Naive thymus-derived CD4-positive, alpha-beta T cell (primary cell): ENCODE measurements at regions of chr2 and their contacts with region 1.

Region 1: DNA sequence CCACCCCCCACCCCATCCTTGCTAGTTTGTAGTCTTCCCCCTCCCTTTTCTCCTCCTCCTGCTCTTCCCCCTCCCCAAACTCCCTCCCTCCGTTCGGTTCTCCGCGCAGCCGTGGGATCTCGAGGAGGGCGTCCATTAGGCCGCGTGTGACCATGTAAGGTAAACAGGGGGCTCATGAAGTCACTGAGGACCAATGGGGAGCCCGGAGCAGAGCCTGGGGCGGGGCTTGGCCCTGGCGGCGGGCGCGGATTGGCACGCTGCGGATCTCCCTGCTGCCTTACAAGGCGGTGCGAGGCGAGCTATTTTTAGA is 246 bp upstream of the KLF7 start:
- DNase-seq: peak; percentile 88 to 99 (median 98)
- ATAC-seq: peak; percentile 93
- H3K4me3 ChIP-seq: peak overlapping the region; percentile 89
- H3K4me3 Mint-ChIP-seq: peak overlapping the region; percentile 94 to 100 (median 98)
- H3K27ac ChIP-seq: peak overlapping the region; percentile 100
- H3K27ac Mint-ChIP-seq: peak overlapping the region; percentile 93 to 99 (median 97)
- H3K4me1 ChIP-seq: peaks cover 0 to 17% of the 10 kb centered on the region in 2 donors
- H3K4me1 Mint-ChIP-seq: peaks cover 32 to 48% (median 36%) of the 10 kb centered on the region in 7 donors
- H3K27me3 ChIP-seq: no peaks in the 10 kb centered on the region
- H3K27me3 Mint-ChIP-seq: peaks cover 0 to 2% (median 0%) of the 10 kb centered on the region in 5 donors

Region 2: GRCh38 chr2:206728277-206729199 is 437.5 kb before region 1 on chr2:
- CTCF ChIA-PET with region 1: no interaction called
- POLR2A ChIA-PET with region 1: no interaction called
- intact Hi-C with region 1: no loop called
- DNase-seq: no peak
- ATAC-seq: no peak
- H3K4me3 ChIP-seq: no peak overlapping the region
- H3K4me3 Mint-ChIP-seq: no peak overlapping the region
- H3K27ac ChIP-seq: no peak overlapping the region
- H3K27ac Mint-ChIP-seq: no peak overlapping the region
- H3K4me1 ChIP-seq: no peaks in the 10 kb centered on the region
- H3K4me1 Mint-ChIP-seq: no peaks in the 10 kb centered on the region
- H3K27me3 ChIP-seq: peaks cover 0 to 3% of the 10 kb centered on the region in 2 donors
- H3K27me3 Mint-ChIP-seq: peaks cover 25 to 46% (median 41%) of the 10 kb centered on the region in 5 donors

Region 3: DNA sequence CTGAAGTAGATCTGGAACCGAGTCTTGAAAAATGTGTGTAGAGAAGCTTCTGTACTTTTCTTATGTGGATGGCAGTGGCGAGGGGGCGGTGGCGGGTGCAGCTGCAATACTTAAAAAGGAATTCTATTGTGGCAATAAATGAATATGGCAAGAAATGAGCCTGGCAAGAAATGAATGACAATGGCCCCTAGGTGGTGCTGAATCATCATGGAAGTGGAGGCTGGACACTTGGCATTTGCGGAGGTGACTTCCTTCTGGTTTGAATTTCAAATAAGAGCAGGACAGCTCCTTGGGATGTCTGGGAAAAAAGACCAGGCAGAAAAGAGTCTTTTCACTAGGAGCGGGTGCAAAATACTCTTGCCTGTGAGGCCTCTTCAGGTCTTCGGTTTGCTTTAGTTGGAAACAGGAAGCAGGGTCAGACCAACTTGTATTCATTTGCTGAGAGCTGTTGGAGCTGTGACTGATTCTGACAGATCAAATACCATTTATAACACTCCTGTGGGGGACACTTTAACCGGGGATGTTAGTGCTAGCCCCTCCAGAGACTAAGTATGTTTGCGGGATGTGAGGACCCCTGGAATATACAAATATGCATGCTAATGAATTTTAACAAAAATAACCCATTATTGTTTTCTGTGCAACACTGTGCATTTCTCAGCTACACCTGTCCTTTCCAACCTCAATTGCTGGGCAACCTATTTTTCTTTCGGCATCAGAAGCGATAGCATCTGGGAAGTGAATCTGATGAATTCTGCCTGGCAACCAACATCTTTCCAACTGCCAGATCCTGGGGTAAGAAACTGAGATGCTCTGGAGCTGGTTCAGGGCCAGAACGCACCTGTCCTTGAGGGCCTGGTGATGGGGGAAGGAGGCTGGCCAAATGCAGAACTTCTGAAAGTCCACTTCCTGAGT is 365.2 kb before region 1 on chr2:
- CTCF ChIA-PET with region 1: no interaction called
- POLR2A ChIA-PET with region 1: interaction called, 3 read pairs
- intact Hi-C with region 1: loop called (anchors 5 kb)
- DNase-seq: peak in 8 of 9 donors; percentile 20 to 61 (median 53)
- ATAC-seq: peak; percentile 67
- H3K4me3 ChIP-seq: no peak overlapping the region
- H3K4me3 Mint-ChIP-seq: peak overlapping the region; percentile 52 to 85 (median 79)
- H3K27ac ChIP-seq: peak overlapping the region; percentile 23
- H3K27ac Mint-ChIP-seq: peak overlapping the region; percentile 1 to 86 (median 37)
- H3K4me1 ChIP-seq: peaks cover 0 to 4% of the 10 kb centered on the region in 2 donors
- H3K4me1 Mint-ChIP-seq: peaks cover 15 to 32% (median 24%) of the 10 kb centered on the region in 7 donors
- H3K27me3 ChIP-seq: no peaks in the 10 kb centered on the region
- H3K27me3 Mint-ChIP-seq: no peaks in the 10 kb centered on the region

Region 4: GRCh38 chr2:207091176-207091575 is 74.8 kb before region 1 on chr2:
- CTCF ChIA-PET with region 1: interaction called, 4 read pairs
- POLR2A ChIA-PET with region 1: interaction called, 8 read pairs
- intact Hi-C with region 1: loop called in 1 of 2 experiments (anchors 5 kb)
- DNase-seq: no peak
- ATAC-seq: no peak
- H3K4me3 ChIP-seq: no peak overlapping the region
- H3K4me3 Mint-ChIP-seq: peak overlapping the region in 1 of 10 donors; percentile 6
- H3K27ac ChIP-seq: no peak overlapping the region
- H3K27ac Mint-ChIP-seq: peak overlapping the region in 1 of 9 donors; percentile 41
- H3K4me1 ChIP-seq: peaks cover 0 to 41% of the 10 kb centered on the region in 2 donors
- H3K4me1 Mint-ChIP-seq: peaks cover 29 to 71% (median 64%) of the 10 kb centered on the region in 7 donors
- H3K27me3 ChIP-seq: no peaks in the 10 kb centered on the region
- H3K27me3 Mint-ChIP-seq: no peaks in the 10 kb centered on the region

Region 5: DNA sequence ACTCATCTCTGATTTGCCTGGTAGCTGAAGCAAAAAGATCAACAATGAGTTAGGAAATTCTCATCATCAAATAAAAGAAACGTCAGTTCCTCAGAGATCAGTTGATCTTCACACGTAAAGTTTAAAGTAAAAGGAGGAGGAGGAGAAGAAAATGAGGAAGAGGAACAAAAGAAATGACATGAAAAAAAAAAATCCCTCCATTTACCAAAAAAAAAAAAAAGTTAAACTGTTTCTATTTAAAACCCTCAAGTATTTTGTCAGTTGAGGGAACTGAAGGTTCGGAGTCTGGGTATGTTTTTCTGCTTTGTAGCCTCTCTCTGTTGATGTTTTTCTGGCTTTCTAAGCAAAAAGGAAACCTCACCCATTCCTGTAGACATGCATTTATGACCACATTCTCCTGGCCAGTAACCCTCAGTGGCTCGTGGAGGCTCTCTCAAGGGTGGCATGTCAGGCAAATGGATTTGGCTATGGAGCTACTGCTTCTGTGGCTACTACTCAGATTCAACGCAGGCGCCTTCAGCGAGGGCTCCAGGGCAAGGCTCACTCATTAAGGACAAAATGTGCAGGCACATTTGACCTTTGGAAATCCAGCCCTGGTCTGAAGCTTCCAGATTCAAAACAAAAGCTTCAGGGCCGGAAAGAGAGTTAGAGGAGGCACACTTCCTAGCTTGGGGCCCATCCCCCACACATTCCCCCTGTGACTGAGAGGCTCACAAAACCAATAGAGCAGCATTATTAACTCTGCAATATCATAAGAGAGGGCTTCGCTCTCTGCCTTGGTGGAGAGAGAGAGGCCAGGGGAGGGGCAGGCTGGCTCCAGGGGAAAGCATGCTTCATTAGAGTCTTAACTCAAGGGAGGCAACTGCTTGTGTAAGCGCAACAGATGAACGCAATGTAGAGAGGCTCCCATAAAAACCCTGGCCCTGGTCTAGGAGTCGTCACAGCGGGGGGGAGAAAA is 22.5 kb before region 1 on chr2:
- CTCF ChIA-PET with region 1: interaction called, 61 read pairs
- POLR2A ChIA-PET with region 1: interaction called, 433 read pairs
- intact Hi-C with region 1: loop called (anchors 1 kb)
- DNase-seq: peak; percentile 34 to 92 (median 83)
- ATAC-seq: peak; percentile 83
- H3K4me3 ChIP-seq: peak overlapping the region; percentile 57
- H3K4me3 Mint-ChIP-seq: peak overlapping the region; percentile 59 to 90 (median 80)
- H3K27ac ChIP-seq: peak overlapping the region; percentile 86
- H3K27ac Mint-ChIP-seq: peak overlapping the region; percentile 92 to 99 (median 96)
- H3K4me1 ChIP-seq: peaks cover 17 to 51% of the 10 kb centered on the region in 2 donors
- H3K4me1 Mint-ChIP-seq: peaks cover 45 to 95% (median 87%) of the 10 kb centered on the region in 7 donors
- H3K27me3 ChIP-seq: no peaks in the 10 kb centered on the region
- H3K27me3 Mint-ChIP-seq: no peaks in the 10 kb centered on the region

Region 6: GRCh38 chr2:207352978-207353671 is 187.1 kb after region 1 on chr2:
- CTCF ChIA-PET with region 1: no interaction called
- POLR2A ChIA-PET with region 1: interaction called, 3 read pairs
- intact Hi-C with region 1: loop called in 1 of 2 experiments (anchors 1 kb)
- DNase-seq: peak in 5 of 9 donors; percentile 8 to 37 (median 32)
- ATAC-seq: peak; percentile 51
- H3K4me3 ChIP-seq: no peak overlapping the region
- H3K4me3 Mint-ChIP-seq: peak overlapping the region in 2 of 10 donors; percentile 17 to 26
- H3K27ac ChIP-seq: no peak overlapping the region
- H3K27ac Mint-ChIP-seq: peak overlapping the region in 3 of 9 donors; percentile 6 to 65 (median 53)
- H3K4me1 ChIP-seq: no peaks in the 10 kb centered on the region
- H3K4me1 Mint-ChIP-seq: peaks cover 0 to 12% (median 9%) of the 10 kb centered on the region in 7 donors
- H3K27me3 ChIP-seq: no peaks in the 10 kb centered on the region
- H3K27me3 Mint-ChIP-seq: no peaks in the 10 kb centered on the region

Region 7: GRCh38 chr2:208025037-208025813 is 859.2 kb after region 1 on chr2 and contains the start of gene PLEKHM3:
- CTCF ChIA-PET with region 1: no interaction called
- POLR2A ChIA-PET with region 1: no interaction called
- intact Hi-C with region 1: loop called in 1 of 2 experiments (anchors 5 kb)
- DNase-seq: peak; percentile 12 to 80 (median 62)
- ATAC-seq: peak; percentile 93
- H3K4me3 ChIP-seq: peak within 1 kb of the TSS; percentile 88
- H3K4me3 Mint-ChIP-seq: peak within 1 kb of the TSS; percentile 85 to 100 (median 96)
- H3K27ac ChIP-seq: peak within 1 kb of the TSS; percentile 76
- H3K27ac Mint-ChIP-seq: peak within 1 kb of the TSS; percentile 89 to 98 (median 94)
- H3K4me1 ChIP-seq: peaks cover 0 to 4% of the 10 kb centered on the region in 2 donors
- H3K4me1 Mint-ChIP-seq: peaks cover 12 to 34% (median 27%) of the 10 kb centered on the region in 7 donors
- H3K27me3 ChIP-seq: no peaks in the 10 kb centered on the region
- H3K27me3 Mint-ChIP-seq: no peaks in the 10 kb centered on the region
- total RNA-seq, gene PLEKHM3: 6.1 to 19.4 (median 15.5) TPM